ENCODE measurements at regions of chr22 and their contacts with region 1.

Region 1: DNA sequence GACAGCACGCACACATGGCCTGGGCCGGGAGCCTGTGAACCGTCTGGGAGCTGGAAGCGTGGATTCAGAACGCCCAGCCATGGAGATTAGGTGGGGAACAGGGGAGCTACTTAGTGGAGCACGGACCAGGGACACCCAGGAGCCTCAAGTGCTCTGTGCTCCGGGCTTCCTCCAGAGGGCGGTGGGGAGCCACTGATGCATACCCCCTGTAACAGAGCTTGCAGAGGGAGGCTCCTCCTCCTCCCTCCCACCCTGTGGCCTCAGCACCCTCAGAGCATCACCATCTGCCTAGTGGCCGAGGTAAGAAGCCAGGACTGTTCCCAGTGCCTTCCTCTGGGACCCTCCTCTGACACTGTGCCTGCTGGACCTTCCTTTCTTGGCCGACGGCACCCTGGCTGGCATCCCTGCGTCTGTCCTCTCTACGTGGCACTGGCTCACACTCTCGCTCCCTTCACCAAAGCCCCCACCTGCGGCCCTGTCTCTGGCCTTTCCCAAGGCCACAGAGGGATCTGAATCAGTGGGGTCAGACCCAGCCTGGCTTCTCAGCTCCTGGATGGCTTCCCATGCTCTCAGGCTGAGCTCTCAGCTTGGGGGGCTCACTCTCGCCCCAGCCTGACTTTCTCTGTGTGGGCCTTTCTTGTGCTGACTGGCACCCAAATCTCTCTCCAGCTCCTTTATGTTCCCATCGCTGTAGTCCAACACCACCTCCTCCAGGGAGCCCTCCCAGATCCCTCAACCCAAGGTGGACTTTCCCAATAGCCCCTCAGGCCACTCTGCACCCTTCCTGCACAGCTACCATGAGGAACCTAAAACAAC is 780.9 kb downstream of the BRD1 start:
- DNase-seq: peak; percentile 90
- ATAC-seq: peak; percentile 100
- H3K4me3 Mint-ChIP-seq: no peak overlapping the region
- H3K27ac Mint-ChIP-seq: no peak overlapping the region
- H3K4me1 Mint-ChIP-seq: peaks cover 11% of the 10 kb centered on the region
- H3K27me3 Mint-ChIP-seq: no peaks in the 10 kb centered on the region; the same call in 1 of the 2 replicates
- CTCF ChIP-seq: peak; percentile 48; the same call in 1 of the 2 replicates

Region 2: DNA sequence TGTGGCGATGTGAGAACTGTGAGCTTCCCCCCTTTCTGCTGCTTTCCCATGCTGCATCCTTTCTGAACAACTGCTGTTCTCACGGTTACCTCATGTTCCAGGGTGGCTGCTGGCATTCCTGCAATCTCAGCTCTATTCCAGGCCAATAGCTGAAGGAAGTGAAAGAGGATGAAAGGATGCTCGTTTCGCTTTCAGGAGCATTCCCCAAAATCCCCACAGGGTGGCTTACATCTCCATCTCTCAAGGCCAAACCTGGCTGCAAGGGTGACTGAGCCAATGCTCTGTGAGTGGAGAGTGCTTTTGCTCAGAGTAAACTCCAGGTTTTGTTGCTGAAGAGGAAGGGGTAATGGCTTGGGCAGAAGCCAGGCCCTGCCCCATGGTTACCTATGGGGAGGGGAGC is 67.3 kb before region 1 on chr22:
- CTCF ChIA-PET with region 1: interaction called, 13 read pairs
- POLR2A ChIA-PET with region 1: no interaction called
- DNase-seq: peak; percentile 45
- ATAC-seq: peak; percentile 79
- H3K4me3 Mint-ChIP-seq: no peak overlapping the region
- H3K27ac Mint-ChIP-seq: no peak overlapping the region
- H3K4me1 Mint-ChIP-seq: peaks cover 9% of the 10 kb centered on the region
- H3K27me3 Mint-ChIP-seq: peaks cover 4% of the 10 kb centered on the region; the same call in 1 of the 2 replicates
- CTCF ChIP-seq: no peak

Region 3: DNA sequence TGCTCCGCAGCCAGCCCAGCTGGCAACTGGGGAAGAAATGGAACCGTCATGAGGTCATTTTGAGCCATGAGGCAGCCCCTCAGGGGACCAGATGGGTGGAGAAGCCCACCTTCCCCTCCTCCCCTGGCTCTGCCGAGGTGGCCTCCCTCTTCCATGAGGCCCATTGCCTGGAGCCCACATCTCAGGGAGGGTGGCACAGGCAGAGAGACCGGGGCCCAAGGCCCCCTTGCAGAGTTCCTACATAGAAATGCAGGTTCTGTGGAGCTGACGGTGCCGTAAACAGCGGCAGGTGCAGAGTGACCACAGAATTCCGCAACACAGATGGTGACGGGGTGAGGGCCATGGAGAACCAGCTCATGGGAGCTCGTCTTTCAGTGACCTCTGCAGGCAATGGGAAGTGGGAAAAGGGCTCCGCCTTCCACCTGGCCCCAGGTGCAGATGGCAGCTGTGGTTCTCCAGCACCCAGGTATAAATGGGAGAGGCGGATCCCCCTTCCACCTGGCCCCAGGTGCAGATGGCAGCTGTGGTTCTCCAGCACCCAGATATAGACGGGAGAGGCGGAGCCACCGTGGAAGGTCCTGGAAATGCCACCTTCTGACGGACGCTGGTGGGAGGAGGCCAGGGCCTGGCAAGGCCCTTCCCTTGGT is 15.5 kb after region 1 on chr22:
- CTCF ChIA-PET with region 1: interaction called, 12 read pairs
- POLR2A ChIA-PET with region 1: no interaction called
- DNase-seq: no peak
- ATAC-seq: peak; percentile 43
- H3K4me3 Mint-ChIP-seq: 0 out of 2 replicates have a peak overlapping the region, but pooled peaks have one; percentile 0
- H3K27ac Mint-ChIP-seq: peak overlapping the region; percentile 48
- H3K4me1 Mint-ChIP-seq: peaks cover 49% of the 10 kb centered on the region
- H3K27me3 Mint-ChIP-seq: peaks cover 3% of the 10 kb centered on the region; the same call in 1 of the 2 replicates
- CTCF ChIP-seq: no peak

Region 4: GRCh38 chr22:49076300-49077037 is 29.7 kb after region 1 on chr22:
- CTCF ChIA-PET with region 1: no interaction called
- POLR2A ChIA-PET with region 1: no interaction called
- DNase-seq: no peak
- ATAC-seq: no peak
- H3K4me3 Mint-ChIP-seq: no peak overlapping the region
- H3K27ac Mint-ChIP-seq: no peak overlapping the region
- H3K4me1 Mint-ChIP-seq: no peaks in the 10 kb centered on the region
- H3K27me3 Mint-ChIP-seq: no peaks in the 10 kb centered on the region; the same call in 1 of the 2 replicates
- CTCF ChIP-seq: no peak

Region 5: DNA sequence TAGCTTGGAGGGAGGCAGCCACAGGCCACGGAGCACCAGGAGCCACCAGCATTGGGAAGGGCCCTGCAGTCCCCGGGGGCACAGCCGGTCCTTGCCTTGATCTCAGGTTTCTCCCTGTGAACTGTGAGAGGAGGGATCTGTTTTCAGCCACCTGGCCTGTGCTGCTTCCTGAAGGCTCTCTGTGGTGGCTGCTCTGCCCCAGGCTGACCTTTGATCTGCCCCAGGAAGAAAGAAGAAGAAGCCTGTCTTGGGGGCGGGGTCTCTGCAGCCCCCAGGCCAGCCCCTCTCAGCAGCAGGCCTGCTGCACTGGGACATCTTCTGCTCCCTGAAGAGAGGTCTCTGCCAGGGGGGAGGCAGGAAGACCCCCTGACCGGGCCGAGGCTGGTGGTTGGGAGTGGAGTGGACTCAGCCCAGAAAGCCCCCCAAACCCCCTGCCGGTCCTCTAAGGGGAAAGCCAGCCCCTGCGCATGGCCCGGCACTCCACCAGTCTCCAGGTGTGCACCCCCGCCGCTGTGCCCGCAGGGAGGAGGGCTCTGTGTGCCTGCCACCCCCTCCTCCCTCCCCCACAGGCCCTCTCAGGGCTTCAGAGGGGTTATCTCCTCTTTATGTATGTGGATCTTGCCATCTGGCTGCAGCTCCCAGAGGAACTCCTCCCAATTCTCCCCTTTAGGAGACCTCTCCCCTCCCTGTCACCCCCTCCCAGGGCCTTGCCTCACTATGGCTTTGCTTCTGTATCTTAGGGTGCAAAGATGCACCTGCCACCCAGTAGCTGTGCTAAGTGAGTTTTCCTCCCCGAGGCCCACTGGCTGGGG is 105.6 kb after region 1 on chr22:
- CTCF ChIA-PET with region 1: interaction called, 12 read pairs
- POLR2A ChIA-PET with region 1: no interaction called
- DNase-seq: peak; percentile 54
- ATAC-seq: peak; percentile 81
- H3K4me3 Mint-ChIP-seq: no peak overlapping the region
- H3K27ac Mint-ChIP-seq: no peak overlapping the region
- H3K4me1 Mint-ChIP-seq: peaks cover 26% of the 10 kb centered on the region
- H3K27me3 Mint-ChIP-seq: no peaks in the 10 kb centered on the region
- CTCF ChIP-seq: no peak

Region 6: DNA sequence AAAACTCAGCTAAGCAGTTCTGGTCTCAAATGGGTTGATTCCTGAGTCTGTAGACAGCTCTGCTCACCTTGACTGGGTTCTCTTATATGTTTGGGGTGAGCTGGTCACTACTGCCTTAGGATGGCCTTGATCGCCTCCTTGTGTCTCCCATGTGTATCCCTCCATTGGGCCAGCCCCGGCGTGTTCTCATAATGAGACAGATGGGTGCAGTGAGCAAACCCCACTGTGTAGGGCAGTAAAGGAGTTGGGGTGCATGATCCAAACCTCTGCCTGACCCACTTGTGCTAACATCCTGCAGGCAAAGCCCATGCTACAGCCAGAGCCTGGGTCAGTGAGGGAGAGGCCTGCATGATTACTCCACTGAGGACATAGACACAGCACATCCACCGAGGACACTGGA is 123.3 kb after region 1 on chr22:
- CTCF ChIA-PET with region 1: interaction called, 30 read pairs
- POLR2A ChIA-PET with region 1: no interaction called
- DNase-seq: peak; percentile 36
- ATAC-seq: peak; percentile 65; the same call in 1 of the 2 replicates
- H3K4me3 Mint-ChIP-seq: no peak overlapping the region
- H3K27ac Mint-ChIP-seq: no peak overlapping the region
- H3K4me1 Mint-ChIP-seq: no peaks in the 10 kb centered on the region; the same call in 1 of the 2 replicates
- H3K27me3 Mint-ChIP-seq: peaks cover 4% of the 10 kb centered on the region
- CTCF ChIP-seq: no peak

Region 7: DNA sequence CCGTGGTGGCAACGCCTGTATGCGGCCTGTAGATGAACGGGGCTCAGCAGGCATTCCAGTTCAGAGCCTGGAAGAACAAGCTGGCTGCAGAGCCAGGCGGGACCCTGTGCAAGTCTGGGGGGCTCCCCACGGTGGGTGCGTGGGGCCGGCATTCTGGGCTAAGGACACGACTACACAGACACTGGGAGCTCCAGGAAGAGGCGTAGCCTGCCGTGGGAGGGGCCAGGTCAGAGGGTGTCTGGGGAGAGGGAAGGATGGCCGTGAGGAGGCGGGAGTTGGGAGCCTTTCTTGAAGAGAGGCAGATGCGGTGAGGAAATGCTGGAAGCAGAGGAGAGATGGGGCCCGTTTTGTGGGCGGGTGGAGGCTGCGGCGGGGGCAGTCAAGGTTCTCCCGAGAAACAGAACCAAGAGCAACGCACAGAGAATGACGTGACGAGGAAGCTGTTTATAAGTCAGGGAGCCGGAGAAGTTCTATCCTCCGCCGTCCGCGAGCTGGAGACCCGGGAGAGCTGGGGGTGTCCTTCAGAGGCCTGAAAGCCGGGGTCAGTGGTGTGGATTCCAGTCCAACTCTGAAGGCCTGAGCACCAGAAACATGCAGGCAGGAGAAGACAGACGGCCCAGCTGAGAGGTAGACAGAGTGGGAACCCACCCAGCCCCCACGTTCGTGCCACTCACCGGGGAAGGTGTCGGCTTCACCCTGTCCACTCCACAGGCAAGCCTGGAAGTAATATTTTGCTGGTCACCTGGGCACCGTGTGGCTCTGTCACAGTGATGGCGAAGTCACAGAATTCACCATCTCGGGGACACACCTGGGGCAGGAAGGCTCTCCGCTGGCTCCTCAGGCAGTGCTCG is 251.3 kb after region 1 on chr22:
- CTCF ChIA-PET with region 1: interaction called, 30 read pairs
- POLR2A ChIA-PET with region 1: no interaction called
- DNase-seq: no peak
- ATAC-seq: peak; percentile 52
- H3K4me3 Mint-ChIP-seq: no peak overlapping the region
- H3K27ac Mint-ChIP-seq: no peak overlapping the region
- H3K4me1 Mint-ChIP-seq: peaks cover 5% of the 10 kb centered on the region; the same call in 1 of the 2 replicates
- H3K27me3 Mint-ChIP-seq: peaks cover 7% of the 10 kb centered on the region
- CTCF ChIP-seq: no peak

Region 8: GRCh38 chr22:49632199-49633009 is 585.6 kb after region 1 on chr22:
- CTCF ChIA-PET with region 1: interaction called, 10 read pairs
- POLR2A ChIA-PET with region 1: no interaction called
- DNase-seq: peak; percentile 82
- ATAC-seq: peak; percentile 85
- H3K4me3 Mint-ChIP-seq: peak overlapping the region; percentile 59
- H3K27ac Mint-ChIP-seq: no peak overlapping the region
- H3K4me1 Mint-ChIP-seq: peaks cover 4% of the 10 kb centered on the region; the same call in 1 of the 2 replicates
- H3K27me3 Mint-ChIP-seq: no peaks in the 10 kb centered on the region; the same call in 1 of the 2 replicates
- CTCF ChIP-seq: peak; percentile 62; the same call in 1 of the 2 replicates

Measured in WTC11 (cell line).